A549 (cell line): ENCODE measurements at regions of chr15 and their contacts with region 1.

Region 1: GRCh38 chr15:40064221-40064894 is 25.4 kb upstream of the SRP14 start:
- DNase-seq: peak in 1 of 2 experiments; percentile 73
- ATAC-seq: peak; percentile 47 to 53; a peak in 4 of 6 replicates
- H3K4me3 ChIP-seq: no peak overlapping the region
- H3K27ac ChIP-seq: peak overlapping the region; percentile 70 to 83
- H3K4me1 ChIP-seq: peaks cover 56% of the 10 kb centered on the region
- CTCF ChIP-seq: no peak
- EP300 ChIP-seq: peak; percentile 38 to 40; a peak in 2 of 5 replicates
- POLR2A ChIP-seq: no peak
- RAD21 ChIP-seq: no peak

Region 2: DNA sequence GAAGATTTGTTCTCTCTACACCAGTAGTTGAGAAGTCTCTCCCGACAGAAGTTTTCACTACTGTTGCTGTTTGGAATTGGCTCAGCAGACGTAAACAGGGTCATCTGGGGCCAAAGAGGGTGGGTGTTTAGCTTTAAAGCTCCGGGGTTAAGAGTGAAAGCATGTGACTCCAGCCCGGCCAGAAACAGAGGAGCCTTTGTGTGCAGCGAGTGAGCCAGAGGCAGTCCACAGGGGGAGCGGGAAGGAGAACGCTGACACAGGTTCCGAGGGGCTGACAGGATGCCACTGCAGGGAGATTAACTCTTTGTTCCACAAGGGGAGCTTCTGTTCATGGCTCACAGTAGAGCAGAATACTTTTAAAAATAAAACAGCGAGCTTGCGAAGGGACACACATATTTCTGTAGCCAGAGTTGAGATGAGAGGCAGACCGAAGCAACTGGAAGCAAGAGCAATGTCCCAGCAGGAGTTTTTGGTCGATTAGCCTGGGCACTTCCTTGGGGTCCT is 17.4 kb after region 1 on chr15:
- CTCF ChIA-PET with region 1: no interaction called
- POLR2A ChIA-PET with region 1: interaction called, 11 read pairs
- DNase-seq: peak in 1 of 2 experiments; percentile 32
- ATAC-seq: peak; percentile 83 to 91
- H3K4me3 ChIP-seq: no peak overlapping the region
- H3K27ac ChIP-seq: peak overlapping the region; percentile 50 to 77; a peak in 5 of 6 replicates
- H3K4me1 ChIP-seq: peaks cover 12% of the 10 kb centered on the region
- CTCF ChIP-seq: no peak
- EP300 ChIP-seq: no peak
- POLR2A ChIP-seq: no peak
- RAD21 ChIP-seq: no peak

Region 3: DNA sequence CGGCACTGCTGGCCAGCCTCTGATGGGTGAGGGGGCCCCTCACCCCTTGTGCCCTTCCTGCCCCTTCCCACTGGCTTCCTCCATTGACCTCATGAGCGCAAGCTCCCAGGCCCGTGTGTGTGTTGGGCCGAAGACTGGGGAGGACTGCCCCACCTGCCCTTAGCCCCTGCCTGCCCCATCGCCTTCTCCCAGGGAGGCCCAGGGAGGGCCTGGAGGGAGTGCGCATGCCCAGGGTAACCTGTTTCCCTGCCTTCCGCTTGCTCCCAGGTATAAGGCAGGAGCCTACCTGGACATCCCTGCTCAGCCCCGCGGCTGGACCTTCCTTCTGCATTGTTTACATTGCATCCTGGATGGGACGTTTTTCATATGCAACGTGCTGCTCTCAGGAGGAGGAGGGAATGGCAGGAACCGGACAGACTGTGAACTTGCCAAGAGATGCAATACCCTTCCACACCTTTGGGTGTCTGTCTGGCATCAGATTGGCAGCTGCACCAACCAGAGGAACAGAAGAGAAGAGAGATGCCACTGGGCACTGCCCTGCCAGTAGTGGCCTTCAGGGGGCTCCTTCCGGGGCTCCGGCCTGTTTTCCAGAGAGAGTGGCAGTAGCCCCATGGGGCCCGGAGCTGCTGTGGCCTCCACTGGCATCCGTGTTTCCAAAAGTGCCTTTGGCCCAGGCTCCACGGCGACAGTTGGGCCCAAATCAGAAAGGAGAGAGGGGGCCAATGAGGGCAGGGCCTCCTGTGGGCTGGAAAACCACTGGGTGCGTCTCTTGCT is 873.6 kb after region 1 on chr15:
- CTCF ChIA-PET with region 1: no interaction called
- POLR2A ChIA-PET with region 1: no interaction called
- DNase-seq: peak; percentile 85 to 92
- ATAC-seq: peak; percentile 67 to 86
- H3K4me3 ChIP-seq: no peak overlapping the region
- H3K27ac ChIP-seq: peak overlapping the region; percentile 32 to 59; a peak in 4 of 6 replicates
- H3K4me1 ChIP-seq: peaks cover 22% of the 10 kb centered on the region
- CTCF ChIP-seq: peak; percentile 58
- EP300 ChIP-seq: no peak
- POLR2A ChIP-seq: no peak
- RAD21 ChIP-seq: peak; percentile 67 to 78